ENCODE measurements at regions of chr2 and their contacts with region 1.

Region 1: GRCh38 chr2:202588647-202589581 is 45.9 kb upstream of the FAM117B start:
- DNase-seq: peak; percentile 89
- ATAC-seq: peak; percentile 92
- H3K4me3 ChIP-seq: peak overlapping the region; percentile 44 to 71 (median 54)
- H3K27ac ChIP-seq: no peak overlapping the region
- H3K4me1 ChIP-seq: peaks cover 20% of the 10 kb centered on the region
- H3K27me3 ChIP-seq: no peaks in the 10 kb centered on the region
- CTCF ChIP-seq: peak; percentile 99
- EP300 ChIP-seq: peak; percentile 43 to 44; a peak in 2 of 4 replicates
- POLR2A ChIP-seq: peak in 1 of 2 experiments; percentile 54; a peak in 2 of 4 replicates
- RAD21 ChIP-seq: peak; percentile 93

Region 2: DNA sequence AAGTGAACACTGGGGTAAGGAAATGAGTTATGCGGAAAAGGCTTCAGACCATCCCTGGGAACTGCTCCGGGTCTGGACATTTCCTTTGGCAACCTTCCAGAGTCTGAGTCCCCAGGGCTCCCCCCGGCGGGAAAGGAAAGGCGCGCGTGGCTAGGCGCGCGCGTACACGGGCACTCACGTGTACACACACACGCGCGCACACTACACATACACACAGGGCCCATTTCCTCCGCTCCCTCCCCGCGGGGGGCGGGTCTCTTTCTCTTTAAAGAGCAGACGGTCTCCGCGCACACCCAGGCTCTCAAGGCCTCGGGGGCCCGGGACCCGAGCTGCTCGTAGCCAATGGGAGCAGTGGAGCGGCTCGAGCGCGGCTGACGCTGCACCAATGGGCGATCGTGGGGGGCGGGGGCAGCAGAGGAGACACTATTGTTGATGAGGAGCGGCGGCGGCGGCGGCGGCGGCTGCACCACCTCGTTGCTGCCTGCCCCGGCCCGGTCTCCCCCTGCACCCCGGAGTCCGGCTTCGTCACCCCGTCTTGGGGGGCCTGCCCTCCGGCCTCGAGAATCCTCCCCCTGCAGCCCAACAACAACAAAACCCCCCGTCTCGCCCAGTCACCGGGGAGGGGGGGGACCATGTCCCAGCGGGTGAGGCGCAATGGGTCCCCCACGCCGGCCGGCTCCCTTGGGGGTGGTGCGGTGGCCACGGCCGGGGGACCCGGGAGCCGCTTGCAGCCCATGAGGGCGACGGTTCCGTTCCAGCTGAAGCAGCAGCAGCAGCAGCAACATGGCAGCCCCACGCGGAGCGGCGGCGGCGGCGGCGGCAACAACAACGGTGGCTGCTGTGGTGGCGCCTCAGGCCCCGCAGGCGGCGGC is 45.9 kb after region 1 on chr2 and contains the start of gene FAM117B:
- CTCF ChIA-PET with region 1: interaction called, 3 read pairs
- POLR2A ChIA-PET with region 1: interaction called, 16 read pairs
- in situ Hi-C with region 1: no loop called
- intact Hi-C with region 1: loop called (anchors 2 kb)
- DNase-seq: peak; percentile 98
- ATAC-seq: peak; percentile 97
- H3K4me3 ChIP-seq: peak within 1 kb of the TSS; percentile 96 to 99 (median 98)
- H3K27ac ChIP-seq: peak within 1 kb of the TSS; percentile 89
- H3K4me1 ChIP-seq: peaks cover 46% of the 10 kb centered on the region
- H3K27me3 ChIP-seq: no peaks in the 10 kb centered on the region; a peak in 1 of 5 replicates
- CTCF ChIP-seq: peak; percentile 46
- EP300 ChIP-seq: peak in 1 of 2 experiments; percentile 56; a peak in 2 of 4 replicates
- POLR2A ChIP-seq: peak; percentile 79 to 89
- RAD21 ChIP-seq: peak; percentile 31
- total RNA-seq, gene FAM117B: 11.0 and 16.6 TPM in 2 replicates

Region 3: DNA sequence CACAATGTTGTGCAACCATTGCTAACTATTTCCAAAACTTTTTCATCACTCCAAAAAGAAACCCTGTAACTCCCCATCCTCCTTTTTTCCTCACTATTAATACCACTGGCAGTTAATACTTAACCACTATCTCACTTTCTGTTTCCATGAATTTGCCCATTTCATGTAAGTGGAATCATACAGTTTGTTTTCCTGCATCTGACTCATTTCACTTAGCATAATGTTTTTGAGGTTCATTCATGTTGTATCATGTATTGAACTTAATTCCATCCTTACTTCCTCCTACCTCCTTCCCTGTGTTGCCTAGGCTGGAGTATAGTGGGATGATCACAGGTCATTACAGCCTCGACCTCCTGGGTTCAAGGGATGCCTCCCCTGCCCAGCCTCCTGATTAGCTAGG is 114.2 kb after region 1 on chr2:
- CTCF ChIA-PET with region 1: no interaction called
- POLR2A ChIA-PET with region 1: no interaction called
- in situ Hi-C with region 1: no loop called
- intact Hi-C with region 1: no loop called
- DNase-seq: no peak
- ATAC-seq: no peak
- H3K4me3 ChIP-seq: no peak overlapping the region
- H3K27ac ChIP-seq: no peak overlapping the region
- H3K4me1 ChIP-seq: no peaks in the 10 kb centered on the region
- H3K27me3 ChIP-seq: no peaks in the 10 kb centered on the region
- CTCF ChIP-seq: no peak
- EP300 ChIP-seq: no peak
- POLR2A ChIP-seq: no peak
- RAD21 ChIP-seq: no peak

Region 4: DNA sequence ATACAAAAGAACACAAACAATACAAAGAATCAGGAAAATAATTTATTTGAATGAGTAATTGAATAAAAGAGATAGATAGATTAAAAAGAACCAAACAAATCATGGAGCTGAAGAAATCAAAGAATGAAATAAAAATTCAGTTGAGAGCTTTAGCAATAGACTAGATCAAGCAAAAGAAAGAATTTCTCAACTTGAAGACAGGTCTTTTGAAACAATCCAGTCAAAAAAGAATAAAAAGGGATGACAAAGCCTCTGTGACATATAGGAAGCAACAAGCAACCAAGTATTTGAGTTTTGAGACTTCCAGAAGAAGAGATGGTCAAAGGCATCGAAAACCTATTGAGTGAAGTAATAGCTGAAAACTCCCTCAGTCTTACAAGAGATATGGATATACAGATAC is 154.7 kb after region 1 on chr2:
- CTCF ChIA-PET with region 1: no interaction called
- POLR2A ChIA-PET with region 1: no interaction called
- in situ Hi-C with region 1: no loop called
- intact Hi-C with region 1: loop called (anchors 10 kb)
- DNase-seq: no peak
- ATAC-seq: no peak
- H3K4me3 ChIP-seq: no peak overlapping the region
- H3K27ac ChIP-seq: no peak overlapping the region
- H3K4me1 ChIP-seq: no peaks in the 10 kb centered on the region
- H3K27me3 ChIP-seq: no peaks in the 10 kb centered on the region
- CTCF ChIP-seq: no peak
- EP300 ChIP-seq: no peak
- POLR2A ChIP-seq: no peak
- RAD21 ChIP-seq: no peak

Region 5: DNA sequence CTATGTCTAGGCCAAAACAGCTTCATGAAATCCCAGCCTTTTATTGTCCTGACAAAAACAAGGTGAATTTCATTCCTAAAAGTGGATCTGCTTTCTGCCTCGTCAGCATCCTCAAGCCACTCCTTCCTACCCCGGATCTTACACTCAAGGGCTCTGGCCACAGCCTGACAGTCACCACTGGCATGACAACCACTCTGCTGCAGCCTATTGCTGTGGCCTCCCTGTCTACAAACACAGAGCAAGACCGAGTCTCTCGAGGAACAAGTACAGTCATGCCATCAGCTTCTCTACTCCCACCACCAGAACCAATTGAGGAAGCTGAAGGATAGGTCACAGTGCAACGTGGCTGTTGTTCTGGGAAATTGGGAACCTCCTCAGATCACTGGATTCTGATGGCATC is 176.5 kb after region 1 on chr2:
- CTCF ChIA-PET with region 1: no interaction called
- POLR2A ChIA-PET with region 1: no interaction called
- in situ Hi-C with region 1: no loop called
- intact Hi-C with region 1: loop called (anchors 5 kb)
- DNase-seq: no peak
- ATAC-seq: no peak
- H3K4me3 ChIP-seq: no peak overlapping the region
- H3K27ac ChIP-seq: no peak overlapping the region
- H3K4me1 ChIP-seq: peaks cover 9% of the 10 kb centered on the region
- H3K27me3 ChIP-seq: no peaks in the 10 kb centered on the region
- CTCF ChIP-seq: no peak
- EP300 ChIP-seq: no peak
- POLR2A ChIP-seq: no peak
- RAD21 ChIP-seq: no peak

Region 6: GRCh38 chr2:202870431-202871299 is 281.8 kb after region 1 on chr2:
- CTCF ChIA-PET with region 1: interaction called, 5 read pairs
- POLR2A ChIA-PET with region 1: no interaction called
- in situ Hi-C with region 1: loop called (anchors 5 kb)
- intact Hi-C with region 1: loop called (anchors 1 kb)
- DNase-seq: peak; percentile 81
- ATAC-seq: peak; percentile 88
- H3K4me3 ChIP-seq: peak overlapping the region; percentile 72 to 88 (median 85)
- H3K27ac ChIP-seq: peak overlapping the region; percentile 51
- H3K4me1 ChIP-seq: peaks cover 6% of the 10 kb centered on the region
- H3K27me3 ChIP-seq: no peaks in the 10 kb centered on the region
- CTCF ChIP-seq: peak; percentile 74
- EP300 ChIP-seq: no peak
- POLR2A ChIP-seq: peak in 1 of 2 experiments; percentile 78; a peak in 3 of 4 replicates
- RAD21 ChIP-seq: peak; percentile 63

Region 7: GRCh38 chr2:203122301-203122986 is 533.5 kb after region 1 on chr2:
- CTCF ChIA-PET with region 1: interaction called, 3 read pairs
- POLR2A ChIA-PET with region 1: no interaction called
- in situ Hi-C with region 1: loop called (anchors 25 kb)
- intact Hi-C with region 1: loop called (anchors 1 kb)
- DNase-seq: peak; percentile 34
- ATAC-seq: peak; percentile 64
- H3K4me3 ChIP-seq: no peak overlapping the region
- H3K27ac ChIP-seq: no peak overlapping the region
- H3K4me1 ChIP-seq: peaks cover 9% of the 10 kb centered on the region
- H3K27me3 ChIP-seq: no peaks in the 10 kb centered on the region
- CTCF ChIP-seq: peak; percentile 63
- EP300 ChIP-seq: no peak
- POLR2A ChIP-seq: no peak
- RAD21 ChIP-seq: 0 out of 2 replicates have a peak, but pooled peaks have one; percentile 25